ENCODE measurements at regions of chr3 and their contacts with region 1.

Region 1: DNA sequence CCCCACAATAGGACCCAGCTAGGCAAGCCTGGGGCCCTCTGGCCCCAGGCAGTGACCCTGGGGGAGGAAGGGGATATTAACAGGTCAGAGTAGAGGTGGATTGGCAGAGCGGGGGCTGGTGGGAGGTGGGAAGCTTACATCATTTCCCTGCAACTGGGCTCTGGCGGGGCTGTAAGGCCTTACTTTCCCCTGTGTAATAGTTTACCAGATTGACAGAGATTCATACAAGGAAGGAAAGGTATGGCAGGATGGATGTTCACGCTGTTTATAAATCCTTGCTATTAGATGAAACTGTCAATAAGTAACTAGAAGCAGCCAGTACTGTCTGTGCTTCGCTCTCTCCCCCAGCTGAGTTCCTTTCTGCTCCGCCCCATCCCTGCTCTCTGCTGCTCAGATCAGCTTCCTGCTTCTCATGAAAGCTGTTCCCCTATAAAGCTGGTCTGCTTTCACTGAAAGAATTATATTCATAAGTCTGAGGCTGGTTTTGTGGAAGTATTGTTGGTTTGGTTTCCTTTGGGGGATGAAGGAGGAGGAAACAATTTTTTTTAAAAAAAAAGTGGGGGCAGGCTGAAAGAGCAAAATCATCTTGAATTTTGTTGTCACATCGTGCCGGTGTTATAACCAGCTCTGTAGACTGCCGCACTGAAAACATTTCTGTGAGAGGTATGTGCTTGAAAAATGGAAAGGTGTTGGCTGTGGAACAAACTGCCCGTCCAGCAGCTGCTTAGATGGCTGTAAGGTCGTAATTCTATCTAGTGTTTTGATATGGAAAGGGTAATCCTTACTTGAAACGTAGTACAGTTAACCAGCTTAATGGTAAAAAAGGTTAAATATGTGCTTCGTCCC is 76.4 kb downstream of the BBX start:
- DNase-seq: peak; percentile 55
- H3K4me3 Mint-ChIP-seq: peak overlapping the region; percentile 78
- H3K27ac Mint-ChIP-seq: peak overlapping the region; percentile 86
- H3K4me1 Mint-ChIP-seq: peaks cover 42% of the 10 kb centered on the region
- H3K27me3 Mint-ChIP-seq: no peaks in the 10 kb centered on the region

Region 2: DNA sequence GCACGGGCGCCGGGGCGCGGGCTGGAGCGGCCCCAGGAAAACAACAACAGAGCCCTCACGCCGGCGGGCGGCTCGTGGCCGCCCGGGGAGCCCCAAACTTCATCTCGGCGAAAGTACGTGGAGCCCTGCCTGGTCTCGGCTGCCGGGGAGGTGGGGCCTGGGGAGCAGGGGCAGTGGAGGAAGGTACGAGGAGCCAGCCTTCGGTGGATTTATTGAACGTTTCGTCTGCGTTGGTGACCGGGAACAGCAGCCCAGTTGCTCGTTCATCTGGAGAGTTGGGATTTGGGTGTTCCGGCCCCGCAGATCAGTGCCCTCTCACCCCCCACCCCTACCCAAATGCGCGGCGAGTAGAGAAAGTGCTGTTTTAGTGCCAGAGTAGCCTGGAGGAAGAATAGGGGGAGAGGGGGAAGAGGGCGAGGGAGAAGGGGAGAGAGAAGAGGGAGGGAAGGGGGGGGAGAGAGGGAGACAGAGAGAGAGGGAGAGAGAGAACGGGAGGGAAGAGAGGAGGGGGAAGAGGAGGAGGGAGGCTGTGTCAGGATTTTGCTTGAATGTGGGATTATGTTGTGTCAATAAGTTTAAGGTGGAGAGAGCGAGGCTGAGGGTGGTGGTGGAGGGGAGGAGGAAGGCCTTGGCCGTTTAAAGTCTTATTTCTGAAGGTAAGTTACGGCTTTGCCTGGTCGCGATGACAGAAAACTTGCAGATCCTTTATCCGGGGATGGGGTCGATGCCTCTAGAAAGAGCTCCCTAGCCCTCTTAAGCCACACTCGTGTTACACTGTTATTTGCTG is 75.4 kb before region 1 on chr3:
- CTCF ChIA-PET with region 1: no interaction called
- POLR2A ChIA-PET with region 1: interaction called, 18 read pairs
- DNase-seq: peak; percentile 52
- H3K4me3 Mint-ChIP-seq: peak overlapping the region; percentile 97
- H3K27ac Mint-ChIP-seq: peak overlapping the region; percentile 89
- H3K4me1 Mint-ChIP-seq: peaks cover 21% of the 10 kb centered on the region
- H3K27me3 Mint-ChIP-seq: no peaks in the 10 kb centered on the region

Region 3: GRCh38 chr3:107690522-107691138 is 91.5 kb after region 1 on chr3:
- CTCF ChIA-PET with region 1: no interaction called
- POLR2A ChIA-PET with region 1: no interaction called
- DNase-seq: no peak
- H3K4me3 Mint-ChIP-seq: no peak overlapping the region
- H3K27ac Mint-ChIP-seq: no peak overlapping the region
- H3K4me1 Mint-ChIP-seq: no peaks in the 10 kb centered on the region
- H3K27me3 Mint-ChIP-seq: no peaks in the 10 kb centered on the region